ENCODE measurements at regions of chr2 and their contacts with region 1.

Region 1: GRCh38 chr2:43239981-43240761 is 13.8 kb upstream of the ZFP36L2 start:
- DNase-seq: peak; percentile 77 to 87 (median 79)
- H3K4me3 ChIP-seq: peak overlapping the region in 1 of 3 experiments; percentile 43
- H3K4me3 Mint-ChIP-seq: peak overlapping the region; percentile 31 to 72
- H3K27ac ChIP-seq: peak overlapping the region; percentile 95 to 96
- H3K27ac Mint-ChIP-seq: peak overlapping the region; percentile 98 to 100 (median 100)
- H3K4me1 ChIP-seq: peaks cover 67 to 70% of the 10 kb centered on the region in 2 donors
- H3K4me1 Mint-ChIP-seq: peaks cover 70% of the 10 kb centered on the region
- H3K27me3 ChIP-seq: no peaks in the 10 kb centered on the region
- H3K27me3 Mint-ChIP-seq: peaks cover 0 to 3% (median 2%) of the 10 kb centered on the region in 3 donors
- CTCF ChIP-seq: peak; percentile 24

Region 2: DNA sequence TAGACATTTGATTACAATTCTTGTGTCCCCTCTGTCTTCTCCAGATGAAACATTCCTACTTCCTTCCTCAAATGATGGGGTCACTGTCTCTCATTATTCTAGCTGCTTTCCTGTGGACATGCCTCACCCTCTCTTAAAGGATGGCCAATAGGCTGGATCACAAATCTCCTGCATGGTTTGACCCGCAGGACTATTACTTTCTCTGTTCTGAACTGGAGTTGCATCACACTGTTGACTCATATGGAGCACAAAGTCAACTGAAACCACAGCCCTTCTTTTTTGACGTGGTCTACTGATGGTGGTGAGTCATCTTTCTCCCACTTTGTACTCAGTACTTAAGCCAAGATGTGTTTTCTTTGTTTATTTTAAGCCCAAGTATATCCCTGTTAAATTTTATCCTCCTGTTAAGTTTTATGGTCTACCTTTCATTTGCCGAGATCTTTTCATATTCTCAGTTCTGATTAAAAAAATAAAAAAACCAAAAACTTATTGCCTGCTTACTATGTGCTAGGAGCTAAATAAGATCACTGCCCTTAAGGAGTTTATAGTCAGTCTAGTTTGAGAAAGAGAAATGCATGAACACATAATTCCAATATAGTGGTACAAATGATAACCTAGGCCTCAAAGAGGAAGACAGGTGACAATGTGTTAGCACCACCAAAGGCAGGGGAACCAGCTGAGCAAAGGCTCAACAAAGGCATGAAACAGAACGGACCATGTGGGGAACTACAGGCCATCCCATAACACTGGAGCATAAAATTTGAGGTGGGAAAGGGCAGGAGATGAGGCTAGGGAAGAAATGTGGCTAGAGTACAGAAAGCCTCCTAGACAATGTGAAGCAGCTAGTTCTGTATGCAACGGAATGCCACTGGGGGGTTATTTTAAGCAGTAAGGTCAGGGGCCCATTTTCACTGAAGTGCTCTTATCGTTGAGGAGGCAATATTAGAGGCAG is 53.8 kb after region 1 on chr2:
- intact Hi-C with region 1: loop called (anchors 5 to 10 kb)
- DNase-seq: peak; percentile 97 to 99 (median 99)
- H3K4me3 ChIP-seq: no peak overlapping the region
- H3K4me3 Mint-ChIP-seq: no peak overlapping the region
- H3K27ac ChIP-seq: peak overlapping the region; percentile 81 to 94
- H3K27ac Mint-ChIP-seq: peak overlapping the region; percentile 97 to 99 (median 99)
- H3K4me1 ChIP-seq: peaks cover 29 to 30% of the 10 kb centered on the region in 2 donors
- H3K4me1 Mint-ChIP-seq: peaks cover 33% of the 10 kb centered on the region
- H3K27me3 ChIP-seq: no peaks in the 10 kb centered on the region
- H3K27me3 Mint-ChIP-seq: peaks cover 0 to 2% (median 0%) of the 10 kb centered on the region in 3 donors
- CTCF ChIP-seq: no peak

Measured in CD14-positive monocyte (primary cell).